Endothelial cell of umbilical vein (primary cell): ENCODE measurements at regions of chr11 and their contacts with region 1.

Region 1: GRCh38 chr11:107619926-107620325 is 29.0 kb downstream of the ELMOD1 start:
- DNase-seq: peak; percentile 90
- H3K4me3 ChIP-seq: no peak overlapping the region
- H3K27ac ChIP-seq: no peak overlapping the region
- H3K4me1 ChIP-seq: peaks cover 31% of the 10 kb centered on the region
- H3K27me3 ChIP-seq: no peaks in the 10 kb centered on the region
- CTCF ChIP-seq: no peak
- POLR2A ChIP-seq: no peak

Region 2: GRCh38 chr11:107263844-107264563 is 355.9 kb before region 1 on chr11:
- CTCF ChIA-PET with region 1: no interaction called
- POLR2A ChIA-PET with region 1: no interaction called
- dilution Hi-C with region 1: no loop called
- intact Hi-C with region 1: no loop called
- DNase-seq: no peak
- H3K4me3 ChIP-seq: no peak overlapping the region
- H3K27ac ChIP-seq: no peak overlapping the region
- H3K4me1 ChIP-seq: no peaks in the 10 kb centered on the region
- H3K27me3 ChIP-seq: no peaks in the 10 kb centered on the region
- CTCF ChIP-seq: no peak
- POLR2A ChIP-seq: no peak

Region 3: DNA sequence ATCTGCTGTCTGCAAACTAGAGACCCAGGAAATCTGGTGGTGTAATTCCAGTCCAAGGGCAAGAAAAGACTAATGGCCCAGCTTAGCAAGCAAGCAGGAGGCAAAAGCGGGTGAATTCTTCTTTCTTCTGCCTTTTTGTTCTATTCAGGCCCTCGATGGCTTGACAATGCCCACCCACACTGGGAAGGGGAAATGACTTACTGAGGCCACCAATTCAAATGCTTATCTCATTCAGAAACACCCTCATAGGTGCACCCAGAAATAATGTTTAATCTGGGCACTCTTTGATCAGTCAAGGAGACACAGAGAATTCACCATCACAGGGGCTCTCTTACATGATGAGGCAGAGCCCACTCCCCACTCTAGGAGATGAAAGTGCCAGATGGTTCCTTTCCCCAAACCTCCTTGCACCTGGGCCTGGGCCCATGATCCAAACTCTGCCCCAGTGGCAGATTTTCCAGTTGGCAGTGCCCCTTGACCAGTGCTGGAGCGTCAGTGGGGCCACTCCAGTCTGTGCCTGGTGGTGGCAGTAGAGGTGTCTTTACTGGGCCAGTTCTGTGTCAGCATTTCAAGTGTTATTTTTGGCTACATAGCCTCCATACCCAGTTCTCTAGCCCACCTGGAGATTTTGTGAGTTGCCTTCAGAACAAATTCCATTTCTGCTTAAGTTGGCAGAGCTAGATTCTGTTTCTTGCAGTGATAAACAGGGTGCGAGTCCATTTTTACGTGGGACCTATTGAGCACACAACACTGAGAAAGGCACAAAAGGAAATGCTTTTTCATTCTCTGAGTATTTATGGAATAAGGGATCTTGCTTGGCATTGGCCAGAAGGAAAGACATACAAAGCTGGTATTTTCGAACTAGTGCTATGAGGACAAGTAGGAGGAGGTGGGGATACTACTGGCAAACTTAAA is 21.4 kb before region 1 on chr11:
- CTCF ChIA-PET with region 1: interaction called, 11 read pairs
- POLR2A ChIA-PET with region 1: no interaction called
- dilution Hi-C with region 1: no loop called
- intact Hi-C with region 1: no loop called
- DNase-seq: peak; percentile 63
- H3K4me3 ChIP-seq: no peak overlapping the region
- H3K27ac ChIP-seq: no peak overlapping the region
- H3K4me1 ChIP-seq: no peaks in the 10 kb centered on the region
- H3K27me3 ChIP-seq: peaks cover 2 to 19% of the 10 kb centered on the region in 2 experiments
- CTCF ChIP-seq: peak; percentile 77 to 81
- POLR2A ChIP-seq: no peak

Region 4: DNA sequence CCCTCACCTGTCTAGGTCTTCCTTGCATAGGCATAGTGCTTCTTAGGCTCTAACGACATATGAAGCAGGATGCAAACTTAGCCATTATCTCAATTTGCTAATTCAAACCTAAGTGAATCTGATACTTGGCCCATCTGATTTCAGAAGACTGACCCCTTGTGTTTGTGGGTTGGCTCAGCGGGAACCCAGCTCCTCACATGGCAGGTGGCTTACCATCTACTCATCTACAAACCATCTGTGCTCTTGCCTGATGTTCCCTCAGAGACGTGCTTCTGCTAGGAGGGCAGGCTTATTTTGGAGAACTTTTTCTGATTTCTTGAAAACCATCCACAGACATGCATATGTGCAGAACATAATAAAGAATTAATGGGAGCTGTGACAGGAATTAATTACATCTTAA is 13.8 kb before region 1 on chr11:
- CTCF ChIA-PET with region 1: interaction called, 24 read pairs
- POLR2A ChIA-PET with region 1: interaction called, 4 read pairs
- dilution Hi-C with region 1: no loop called
- intact Hi-C with region 1: loop called (anchors 1 kb)
- DNase-seq: no peak
- H3K4me3 ChIP-seq: no peak overlapping the region
- H3K27ac ChIP-seq: no peak overlapping the region
- H3K4me1 ChIP-seq: peaks cover 22% of the 10 kb centered on the region
- H3K27me3 ChIP-seq: no peaks in the 10 kb centered on the region
- CTCF ChIP-seq: no peak
- POLR2A ChIP-seq: no peak

Region 5: DNA sequence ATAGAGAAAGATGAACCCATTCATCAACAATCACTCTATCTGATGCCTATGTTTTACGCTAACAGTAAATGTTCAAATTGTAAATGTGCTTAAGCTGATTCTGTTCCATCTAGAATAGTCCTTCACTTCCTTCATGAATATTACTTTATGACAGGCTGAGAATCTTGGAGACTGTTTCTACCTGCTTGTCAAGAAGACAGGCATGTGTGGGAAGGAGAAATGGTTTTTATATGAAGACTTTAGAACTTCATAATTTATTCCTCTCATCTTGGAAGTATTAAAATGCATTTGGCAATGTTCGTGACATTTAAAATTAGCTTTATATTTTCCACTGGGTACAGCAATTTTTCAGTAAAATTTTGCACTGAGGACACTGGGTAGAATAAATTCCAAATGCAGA is 12.0 kb after region 1 on chr11:
- CTCF ChIA-PET with region 1: interaction called, 17 read pairs
- POLR2A ChIA-PET with region 1: no interaction called
- dilution Hi-C with region 1: no loop called
- intact Hi-C with region 1: no loop called
- DNase-seq: no peak
- H3K4me3 ChIP-seq: no peak overlapping the region
- H3K27ac ChIP-seq: peak overlapping the region; percentile 50
- H3K4me1 ChIP-seq: peaks cover 14% of the 10 kb centered on the region
- H3K27me3 ChIP-seq: no peaks in the 10 kb centered on the region
- CTCF ChIP-seq: no peak
- POLR2A ChIP-seq: no peak